ENCODE measurements at regions of chr3 and their contacts with region 1.

Region 1: GRCh38 chr3:152193673-152194267 is 75.0 kb upstream of the MBNL1 start:
- DNase-seq: peak; percentile 57
- H3K4me3 Mint-ChIP-seq: peak overlapping the region; percentile 72
- H3K27ac Mint-ChIP-seq: peak overlapping the region; percentile 88
- H3K4me1 Mint-ChIP-seq: peaks cover 82% of the 10 kb centered on the region
- H3K27me3 Mint-ChIP-seq: no peaks in the 10 kb centered on the region

Region 2: DNA sequence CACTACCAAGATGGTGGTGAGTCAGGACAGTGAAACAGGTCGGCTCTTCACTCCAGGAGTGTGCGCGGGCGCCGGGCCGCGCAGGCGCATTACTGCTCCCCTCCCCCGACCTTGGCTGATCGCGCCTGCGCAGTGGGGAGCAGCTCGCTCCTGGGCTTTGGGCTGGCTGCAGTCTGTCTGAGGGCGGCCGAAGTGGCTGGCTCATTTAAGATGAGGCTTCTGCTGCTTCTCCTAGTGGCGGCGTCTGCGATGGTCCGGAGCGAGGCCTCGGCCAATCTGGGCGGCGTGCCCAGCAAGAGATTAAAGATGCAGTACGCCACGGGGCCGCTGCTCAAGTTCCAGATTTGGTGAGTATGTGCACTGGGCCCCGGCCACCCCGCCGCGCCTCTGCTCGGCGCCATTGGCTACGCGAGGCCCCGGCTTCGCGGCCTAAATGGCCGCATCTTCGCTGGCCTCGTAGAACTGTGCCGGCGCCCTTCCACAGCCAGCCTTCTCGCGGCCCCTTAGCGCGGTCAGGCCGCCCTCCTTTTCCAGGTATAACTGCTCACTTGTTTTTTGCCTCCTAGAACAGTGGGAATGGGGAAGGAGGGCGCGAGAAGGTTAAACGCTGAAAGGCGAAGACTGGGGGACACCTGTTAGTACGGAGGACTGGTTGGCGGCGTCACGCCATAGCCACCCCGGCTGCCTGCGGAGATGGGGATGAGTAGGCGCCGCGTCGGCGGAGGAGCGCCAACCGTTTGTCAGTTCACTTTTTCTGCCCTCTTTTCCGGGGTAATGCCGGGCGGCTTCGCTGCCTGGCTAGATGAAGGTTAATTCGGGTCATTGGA is 1590.4 kb before region 1 on chr3 and contains the start of gene SELENOT:
- CTCF ChIA-PET with region 1: no interaction called
- intact Hi-C with region 1: loop called (anchors 5 kb)
- DNase-seq: peak; percentile 93
- H3K4me3 Mint-ChIP-seq: peak within 1 kb of the TSS; percentile 96
- H3K27ac Mint-ChIP-seq: peak within 1 kb of the TSS; percentile 97
- H3K4me1 Mint-ChIP-seq: peaks cover 59% of the 10 kb centered on the region
- H3K27me3 Mint-ChIP-seq: no peaks in the 10 kb centered on the region
- total RNA-seq, gene SELENOT: 68.4 to 71.2 TPM

Region 3: GRCh38 chr3:152183473-152183872 is 10.3 kb before region 1 on chr3:
- CTCF ChIA-PET with region 1: interaction called, 17 read pairs
- intact Hi-C with region 1: loop called (anchors 1 kb)
- DNase-seq: peak; percentile 80
- H3K4me3 Mint-ChIP-seq: peak overlapping the region; percentile 46
- H3K27ac Mint-ChIP-seq: peak overlapping the region; percentile 28
- H3K4me1 Mint-ChIP-seq: peaks cover 81% of the 10 kb centered on the region
- H3K27me3 Mint-ChIP-seq: no peaks in the 10 kb centered on the region

Region 4: DNA sequence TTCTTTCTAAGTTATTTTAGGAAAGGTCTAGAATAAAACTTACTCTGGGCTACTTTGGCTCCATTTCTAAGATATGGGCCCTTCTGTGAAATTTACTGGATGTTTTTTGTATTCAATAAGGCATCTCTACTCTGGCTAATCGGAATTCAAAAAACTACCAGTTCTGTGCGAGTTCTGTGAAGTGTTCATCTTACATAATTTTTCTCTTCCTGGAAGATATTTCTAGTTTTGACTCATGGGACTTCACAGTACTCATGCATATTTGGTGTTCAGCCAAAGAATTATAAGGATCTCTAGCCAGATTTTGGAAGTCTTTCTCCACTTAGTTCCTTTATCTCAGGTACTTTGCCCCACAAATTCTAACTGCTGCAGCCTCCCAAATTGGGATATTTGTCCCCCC is 28.6 kb after region 1 on chr3:
- CTCF ChIA-PET with region 1: interaction called, 3 read pairs
- intact Hi-C with region 1: loop called (anchors 1 kb)
- DNase-seq: no peak
- H3K4me3 Mint-ChIP-seq: peak overlapping the region; percentile 71
- H3K27ac Mint-ChIP-seq: peak overlapping the region; percentile 98
- H3K4me1 Mint-ChIP-seq: peaks cover 81% of the 10 kb centered on the region
- H3K27me3 Mint-ChIP-seq: no peaks in the 10 kb centered on the region

Region 5: GRCh38 chr3:152268555-152269425 is 75.0 kb after region 1 on chr3 and contains the start of gene MBNL1:
- CTCF ChIA-PET with region 1: interaction called, 16 read pairs
- intact Hi-C with region 1: loop called (anchors 1 kb)
- DNase-seq: peak; percentile 91
- H3K4me3 Mint-ChIP-seq: peak within 1 kb of the TSS; percentile 81
- H3K27ac Mint-ChIP-seq: peak within 1 kb of the TSS; percentile 91
- H3K4me1 Mint-ChIP-seq: peaks cover 46% of the 10 kb centered on the region
- H3K27me3 Mint-ChIP-seq: no peaks in the 10 kb centered on the region
- total RNA-seq, gene MBNL1: 387 to 391 TPM

Region 6: DNA sequence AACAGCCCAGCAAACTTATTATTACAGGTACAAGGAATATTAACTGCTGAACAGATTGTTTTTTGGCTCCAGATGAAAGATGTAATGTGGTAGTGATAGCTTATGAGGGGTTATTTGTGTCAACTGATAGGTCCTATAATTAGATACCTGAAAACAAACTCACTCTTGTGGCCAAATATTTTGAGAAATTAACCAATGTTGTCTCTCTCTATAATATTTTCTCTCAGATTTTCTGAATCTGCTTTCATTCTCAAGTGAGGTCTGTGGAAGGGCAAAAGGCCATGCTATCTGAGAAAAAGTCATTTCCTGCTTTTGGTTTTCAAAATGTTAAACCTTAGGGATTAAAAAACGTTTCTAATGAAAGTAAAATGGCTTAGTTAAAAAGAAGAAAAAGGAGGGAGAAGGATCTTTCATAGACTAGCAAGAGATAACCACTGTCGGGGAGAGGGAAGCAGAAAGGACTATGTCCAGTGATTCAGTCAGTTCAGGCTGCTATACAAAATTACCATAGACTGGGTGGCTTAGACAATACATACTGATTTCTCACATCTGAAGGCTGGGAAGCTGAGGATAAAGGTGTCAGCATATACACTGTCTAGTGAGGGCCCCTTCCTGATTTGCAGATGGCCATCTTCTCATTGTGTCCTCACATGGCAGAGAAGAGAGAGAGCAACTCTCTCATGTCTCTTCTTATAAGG is 363.7 kb after region 1 on chr3:
- CTCF ChIA-PET with region 1: no interaction called
- intact Hi-C with region 1: no loop called
- DNase-seq: no peak
- H3K4me3 Mint-ChIP-seq: no peak overlapping the region
- H3K27ac Mint-ChIP-seq: no peak overlapping the region
- H3K4me1 Mint-ChIP-seq: peaks cover 11% of the 10 kb centered on the region
- H3K27me3 Mint-ChIP-seq: no peaks in the 10 kb centered on the region